Activated CD4-positive, alpha-beta memory T cell treated with anti-CD3 and anti-CD28 coated beads for 36 hours (primary cell): ENCODE measurements at regions of chr11 and their contacts with region 1.

Region 1: GRCh38 chr11:3807909-3808860 is at the start of gene PGAP2:
- DNase-seq: peak; percentile 77
- H3K4me3 Mint-ChIP-seq: peak within 1 kb of the TSS; percentile 84
- H3K27ac Mint-ChIP-seq: peak within 1 kb of the TSS; percentile 80
- H3K4me1 Mint-ChIP-seq: peaks cover 19% of the 10 kb centered on the region
- H3K27me3 Mint-ChIP-seq: no peaks in the 10 kb centered on the region
- total RNA-seq, gene PGAP2: 27.4 to 30.2 TPM

Region 2: GRCh38 chr11:3775736-3776406 is 32.3 kb before region 1 on chr11:
- CTCF ChIA-PET with region 1: interaction called, 22 read pairs
- POLR2A ChIA-PET with region 1: no interaction called
- intact Hi-C with region 1: loop called (anchors 5 kb)
- DNase-seq: no peak
- H3K4me3 Mint-ChIP-seq: no peak overlapping the region
- H3K27ac Mint-ChIP-seq: no peak overlapping the region
- H3K4me1 Mint-ChIP-seq: peaks cover 3% of the 10 kb centered on the region
- H3K27me3 Mint-ChIP-seq: no peaks in the 10 kb centered on the region

Region 3: DNA sequence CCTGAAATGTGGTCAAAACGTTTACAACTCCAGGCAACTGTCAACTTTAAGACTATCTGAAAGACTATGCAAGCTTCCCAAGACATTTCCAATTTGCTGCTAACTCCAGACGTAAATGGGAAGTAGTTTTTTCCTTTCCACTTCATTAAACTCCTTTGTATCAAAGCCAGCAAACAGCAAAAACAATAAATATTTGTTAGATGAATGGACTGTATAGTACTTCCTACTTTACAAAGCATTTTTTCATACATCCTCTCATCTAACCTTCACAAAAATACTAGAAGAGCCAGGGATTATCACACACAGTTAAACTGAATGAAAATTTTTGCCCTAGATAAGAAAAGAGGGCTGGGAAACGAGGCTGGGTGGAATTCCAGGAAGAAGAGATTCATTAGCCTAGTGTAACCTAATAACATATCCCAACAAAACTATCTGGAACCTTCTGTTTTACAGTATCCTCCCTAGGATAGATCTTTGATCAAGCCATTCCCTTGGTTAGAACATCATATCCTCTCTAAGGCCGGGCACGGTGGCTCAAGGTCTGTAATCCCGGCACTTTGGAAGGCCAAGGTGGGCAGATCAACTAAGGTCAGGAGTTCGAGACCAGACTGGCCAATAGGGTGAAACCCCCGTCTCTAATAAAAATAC is 21.3 kb before region 1 on chr11:
- CTCF ChIA-PET with region 1: interaction called, 36 read pairs
- POLR2A ChIA-PET with region 1: interaction called, 3 read pairs
- intact Hi-C with region 1: loop called (anchors 1 kb)
- DNase-seq: no peak
- H3K4me3 Mint-ChIP-seq: no peak overlapping the region
- H3K27ac Mint-ChIP-seq: no peak overlapping the region
- H3K4me1 Mint-ChIP-seq: peaks cover 76% of the 10 kb centered on the region
- H3K27me3 Mint-ChIP-seq: no peaks in the 10 kb centered on the region

Region 4: DNA sequence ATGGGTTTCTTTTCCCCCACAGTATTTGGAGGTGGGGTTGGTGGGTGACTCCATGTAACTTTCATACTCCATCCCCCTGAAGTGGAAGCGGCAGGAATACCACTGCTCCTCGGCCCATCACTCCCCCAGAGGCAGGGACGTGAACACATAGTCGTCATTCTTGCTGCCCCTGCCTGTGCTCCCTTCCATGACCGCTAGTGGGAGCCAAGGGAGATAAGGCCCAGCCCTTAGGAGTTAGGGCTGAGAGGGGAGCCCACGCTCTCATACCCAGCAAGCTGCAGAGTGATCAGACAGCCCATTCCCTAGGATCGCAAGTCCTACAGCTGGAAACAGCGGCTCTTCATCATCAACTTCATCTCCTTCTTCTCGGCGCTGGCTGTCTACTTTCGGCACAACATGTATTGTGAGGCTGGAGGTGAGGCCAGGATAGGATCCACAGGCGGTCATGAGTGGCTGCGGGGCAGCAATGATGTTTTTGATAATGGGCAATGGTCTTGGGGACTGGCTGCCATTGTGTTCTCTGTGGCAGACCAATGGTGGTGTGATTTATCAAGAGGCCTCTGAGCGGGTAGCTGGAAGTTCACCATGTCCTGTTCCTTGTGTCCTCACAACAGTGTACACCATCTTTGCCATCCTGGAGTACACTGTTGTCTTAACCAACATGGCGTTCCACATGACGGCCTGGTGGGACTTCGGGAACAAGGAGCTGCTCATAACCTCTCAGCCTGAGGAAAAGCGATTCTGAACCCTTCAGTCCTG is 16.7 kb after region 1 on chr11:
- CTCF ChIA-PET with region 1: interaction called, 31 read pairs
- POLR2A ChIA-PET with region 1: no interaction called
- intact Hi-C with region 1: no loop called
- DNase-seq: peak; percentile 88
- H3K4me3 Mint-ChIP-seq: no peak overlapping the region
- H3K27ac Mint-ChIP-seq: peak overlapping the region; percentile 63
- H3K4me1 Mint-ChIP-seq: peaks cover 33% of the 10 kb centered on the region
- H3K27me3 Mint-ChIP-seq: no peaks in the 10 kb centered on the region

Region 5: DNA sequence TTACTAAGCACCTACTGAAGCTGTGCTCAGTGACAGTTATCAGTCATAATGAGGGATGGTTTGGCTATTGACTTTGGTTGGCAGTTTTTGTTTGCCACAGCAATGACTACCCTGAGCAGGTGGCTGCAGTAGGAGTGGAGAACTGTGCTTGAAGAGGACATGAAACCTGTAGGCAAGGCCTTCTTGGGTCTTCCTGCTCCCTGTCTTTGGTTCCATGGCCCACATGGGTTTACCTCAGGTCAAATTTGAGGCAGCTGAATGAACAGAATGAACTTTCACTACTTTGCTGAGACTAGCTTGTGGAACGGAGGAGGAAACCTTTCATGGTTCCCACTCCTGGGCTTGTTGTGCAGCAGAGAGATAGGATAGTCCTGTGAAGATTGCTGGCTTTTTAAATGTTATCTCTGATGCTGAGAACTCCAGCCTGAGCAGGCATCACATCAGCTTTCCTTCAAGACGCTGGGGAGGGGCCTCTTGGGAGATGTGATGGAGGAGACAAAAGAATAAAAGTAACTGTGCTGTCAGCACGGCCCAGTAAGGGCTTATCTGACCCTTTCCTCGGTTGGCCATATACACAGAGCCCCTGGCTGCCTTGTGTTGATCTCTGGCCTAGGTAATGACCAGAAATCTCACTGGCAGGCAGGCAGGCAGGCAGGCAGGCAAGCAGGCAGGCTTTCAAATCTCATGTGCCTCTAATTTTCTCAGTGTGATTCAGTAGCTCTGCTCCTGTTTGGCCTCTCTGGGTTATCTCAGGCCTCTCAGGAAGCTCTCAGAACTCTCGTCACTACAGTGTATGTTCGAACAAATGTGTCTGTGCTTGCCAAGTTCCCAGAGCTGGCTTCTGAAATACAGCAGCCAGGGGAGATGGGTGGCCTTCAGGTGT is 59.3 kb after region 1 on chr11:
- CTCF ChIA-PET with region 1: no interaction called
- POLR2A ChIA-PET with region 1: no interaction called
- intact Hi-C with region 1: no loop called
- DNase-seq: peak; percentile 68
- H3K4me3 Mint-ChIP-seq: no peak overlapping the region
- H3K27ac Mint-ChIP-seq: peak overlapping the region; percentile 87
- H3K4me1 Mint-ChIP-seq: peaks cover 71% of the 10 kb centered on the region
- H3K27me3 Mint-ChIP-seq: no peaks in the 10 kb centered on the region

Region 6: DNA sequence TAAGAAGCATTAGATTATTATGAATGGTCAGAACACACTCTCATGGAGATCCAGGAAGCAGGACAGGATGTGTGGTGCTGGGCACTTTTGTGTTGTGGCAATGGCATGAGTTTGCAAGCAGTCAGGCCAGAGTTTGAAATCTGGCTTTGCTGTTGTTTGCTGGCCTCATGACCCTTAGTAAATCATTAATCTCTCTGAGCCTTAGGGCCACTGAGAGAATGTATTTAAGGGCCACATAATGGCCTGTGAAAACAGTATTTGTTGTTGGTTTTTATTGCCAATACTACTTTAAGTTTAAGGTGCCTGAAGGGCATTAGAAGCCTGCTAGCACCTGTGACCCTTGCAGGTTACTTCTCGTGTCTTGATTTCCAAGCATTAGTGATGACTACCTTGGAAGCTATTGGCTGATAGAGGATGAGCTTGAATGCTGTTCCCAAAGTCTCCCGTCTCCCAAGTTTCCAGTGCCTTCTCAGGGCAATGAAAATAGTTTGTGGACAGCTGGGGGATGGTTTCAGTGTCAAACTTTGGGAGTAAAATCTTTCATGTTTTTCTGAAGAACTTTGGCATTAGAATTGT is 71.9 kb after region 1 on chr11:
- CTCF ChIA-PET with region 1: no interaction called
- POLR2A ChIA-PET with region 1: no interaction called
- intact Hi-C with region 1: no loop called
- DNase-seq: no peak
- H3K4me3 Mint-ChIP-seq: no peak overlapping the region
- H3K27ac Mint-ChIP-seq: peak overlapping the region; percentile 57
- H3K4me1 Mint-ChIP-seq: peaks cover 75% of the 10 kb centered on the region
- H3K27me3 Mint-ChIP-seq: no peaks in the 10 kb centered on the region